Activated CD4-positive, alpha-beta T cell treated with anti-CD3 and anti-CD28 coated beads for 36 hours (primary cell): ENCODE measurements at regions of chr17 and their contacts with region 1.

Region 1: DNA sequence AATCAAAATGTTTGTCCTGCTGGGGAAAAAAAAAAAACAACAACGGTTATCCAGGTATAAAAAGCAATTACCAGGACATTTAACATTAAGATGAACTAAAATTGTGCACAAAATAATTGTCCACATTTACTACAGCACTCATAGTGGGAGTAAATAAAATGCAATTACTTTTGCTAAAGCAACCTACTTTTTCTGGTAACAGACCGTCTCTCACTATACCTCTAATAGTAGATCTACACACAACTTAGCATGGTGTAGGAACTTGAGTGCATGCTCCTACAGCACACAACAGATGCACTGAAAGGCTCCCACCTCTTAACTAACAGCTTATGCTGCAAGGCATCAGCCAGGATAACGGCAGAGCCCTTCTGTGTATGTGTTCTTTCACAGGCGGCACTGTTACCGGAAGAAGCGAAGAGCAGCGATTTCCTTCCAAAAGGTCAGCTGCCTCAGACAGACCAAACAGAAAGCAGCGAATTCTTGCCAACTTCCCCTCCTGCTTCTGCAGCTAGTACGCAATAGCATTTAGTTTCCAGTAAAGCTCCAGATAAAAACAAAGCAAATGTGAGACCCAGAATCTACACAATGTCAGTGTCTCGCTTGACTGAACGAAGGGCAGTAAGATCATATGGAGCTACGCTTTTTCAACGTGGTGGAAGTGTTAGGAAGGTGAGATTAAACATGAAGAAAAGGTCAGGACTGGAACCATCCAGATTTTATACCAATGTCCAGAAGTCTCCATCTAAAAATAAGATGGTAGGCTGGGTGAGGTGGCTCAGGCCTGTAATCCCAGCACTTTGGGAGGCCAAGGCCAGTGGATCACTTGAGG is 27.6 kb downstream of the STAT5B start:
- DNase-seq: peak; percentile 87
- ATAC-seq: peak; percentile 81
- H3K4me3 Mint-ChIP-seq: peak overlapping the region; percentile 79
- H3K27ac Mint-ChIP-seq: peak overlapping the region; percentile 100
- H3K4me1 Mint-ChIP-seq: peaks cover 71% of the 10 kb centered on the region
- H3K27me3 Mint-ChIP-seq: no peaks in the 10 kb centered on the region

Region 2: DNA sequence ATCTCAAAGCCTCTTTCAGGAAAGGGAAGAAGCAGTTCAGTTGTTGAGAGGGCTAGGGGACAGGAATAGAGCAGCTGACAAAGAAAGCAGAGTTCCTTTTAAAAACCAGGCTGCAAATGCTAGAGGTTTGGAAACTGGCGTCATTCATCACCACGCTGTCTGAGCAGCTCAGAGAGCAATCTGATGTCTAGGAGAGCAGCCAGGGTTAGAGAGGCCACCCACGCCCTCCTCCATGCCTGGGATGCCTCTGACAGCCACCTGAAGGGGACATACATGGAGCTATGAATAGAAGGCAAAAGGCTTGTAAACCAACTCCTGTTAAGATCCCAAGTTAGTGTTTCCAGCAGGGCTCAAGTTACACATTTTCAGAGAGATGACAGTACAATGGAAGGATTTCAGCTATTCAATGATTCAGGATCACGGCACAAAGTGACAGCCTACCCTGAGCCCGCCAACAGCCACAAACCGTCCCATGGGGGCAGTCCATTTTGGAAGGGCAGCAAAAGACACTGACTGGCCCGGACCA is 106.1 kb before region 1 on chr17:
- CTCF ChIA-PET with region 1: no interaction called
- POLR2A ChIA-PET with region 1: no interaction called
- intact Hi-C with region 1: no loop called
- DNase-seq: no peak
- ATAC-seq: no peak
- H3K4me3 Mint-ChIP-seq: no peak overlapping the region
- H3K27ac Mint-ChIP-seq: no peak overlapping the region
- H3K4me1 Mint-ChIP-seq: peaks cover 30% of the 10 kb centered on the region
- H3K27me3 Mint-ChIP-seq: no peaks in the 10 kb centered on the region

Region 3: DNA sequence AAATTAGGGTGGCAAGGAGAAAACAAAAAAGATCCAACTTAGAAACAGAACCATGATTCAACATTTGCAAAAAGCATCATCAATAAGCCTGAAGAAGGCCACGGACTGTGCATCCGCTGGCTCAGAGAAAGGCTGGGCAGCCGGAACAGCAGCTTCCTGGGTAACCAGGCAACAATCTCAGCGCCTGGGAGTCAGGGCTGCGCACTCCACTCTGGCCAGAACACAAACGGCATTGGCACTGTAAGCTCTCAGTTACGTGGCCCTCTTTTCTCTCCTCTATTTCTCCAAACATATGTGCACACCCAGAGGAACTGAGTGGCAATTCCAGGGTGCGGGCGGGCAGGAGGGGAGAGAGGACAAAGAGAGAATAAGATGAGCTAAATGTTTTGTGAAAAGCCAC is 47.9 kb before region 1 on chr17:
- CTCF ChIA-PET with region 1: no interaction called
- POLR2A ChIA-PET with region 1: no interaction called
- intact Hi-C with region 1: no loop called
- DNase-seq: no peak
- ATAC-seq: no peak
- H3K4me3 Mint-ChIP-seq: no peak overlapping the region
- H3K27ac Mint-ChIP-seq: no peak overlapping the region
- H3K4me1 Mint-ChIP-seq: no peaks in the 10 kb centered on the region
- H3K27me3 Mint-ChIP-seq: no peaks in the 10 kb centered on the region

Region 4: GRCh38 chr17:42266918-42267778 is 18.6 kb after region 1 on chr17:
- CTCF ChIA-PET with region 1: interaction called, 84 read pairs
- POLR2A ChIA-PET with region 1: interaction called, 53 read pairs
- intact Hi-C with region 1: loop called (anchors 1 kb)
- DNase-seq: peak; percentile 70
- ATAC-seq: peak; percentile 77
- H3K4me3 Mint-ChIP-seq: peak overlapping the region; percentile 47
- H3K27ac Mint-ChIP-seq: peak overlapping the region; percentile 98
- H3K4me1 Mint-ChIP-seq: peaks cover 61% of the 10 kb centered on the region
- H3K27me3 Mint-ChIP-seq: no peaks in the 10 kb centered on the region

Region 5: DNA sequence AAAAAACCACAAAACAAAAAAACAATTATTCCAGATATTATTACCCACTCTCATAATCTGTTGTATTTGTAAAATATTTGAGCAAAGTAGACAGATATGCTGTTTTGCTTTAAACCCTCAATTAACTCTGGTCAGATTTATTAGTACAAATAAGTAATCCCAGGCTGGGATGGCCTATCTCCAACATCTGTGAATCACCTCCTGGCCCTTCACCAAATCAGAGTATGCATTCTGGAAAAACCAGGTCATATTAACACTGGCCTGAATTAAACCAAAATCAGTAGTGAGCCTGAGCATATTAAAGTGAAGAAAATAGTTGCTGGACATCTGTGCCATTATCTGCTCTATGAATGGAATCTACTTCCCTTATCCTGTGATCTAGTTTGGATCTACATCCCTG is 98.6 kb after region 1 on chr17:
- CTCF ChIA-PET with region 1: no interaction called
- POLR2A ChIA-PET with region 1: interaction called, 12 read pairs
- intact Hi-C with region 1: no loop called
- DNase-seq: no peak
- ATAC-seq: no peak
- H3K4me3 Mint-ChIP-seq: no peak overlapping the region
- H3K27ac Mint-ChIP-seq: peak overlapping the region; percentile 41
- H3K4me1 Mint-ChIP-seq: peaks cover 57% of the 10 kb centered on the region
- H3K27me3 Mint-ChIP-seq: no peaks in the 10 kb centered on the region